Left cardiac atrium (tissue), 4 donors: ENCODE measurements at regions of chr2 and their contacts with region 1.

Region 1: GRCh38 chr2:56191683-56192082 is 7.9 kb downstream of the CCDC85A start:
- DNase-seq: no peak
- ATAC-seq: peak; percentile 71 to 84

Region 2: GRCh38 chr2:56334622-56335021 is 142.9 kb after region 1 on chr2:
- intact Hi-C with region 1: no loop called
- DNase-seq: no peak
- ATAC-seq: peak; percentile 78 to 86

Region 3: GRCh38 chr2:56749152-56749752 is 557.6 kb after region 1 on chr2:
- intact Hi-C with region 1: loop called (anchors 2 to 5 kb)
- DNase-seq: no peak
- ATAC-seq: no peak